CD4-positive, alpha-beta memory T cell (primary cell): ENCODE measurements at regions of chr12 and their contacts with region 1.

Region 1: DNA sequence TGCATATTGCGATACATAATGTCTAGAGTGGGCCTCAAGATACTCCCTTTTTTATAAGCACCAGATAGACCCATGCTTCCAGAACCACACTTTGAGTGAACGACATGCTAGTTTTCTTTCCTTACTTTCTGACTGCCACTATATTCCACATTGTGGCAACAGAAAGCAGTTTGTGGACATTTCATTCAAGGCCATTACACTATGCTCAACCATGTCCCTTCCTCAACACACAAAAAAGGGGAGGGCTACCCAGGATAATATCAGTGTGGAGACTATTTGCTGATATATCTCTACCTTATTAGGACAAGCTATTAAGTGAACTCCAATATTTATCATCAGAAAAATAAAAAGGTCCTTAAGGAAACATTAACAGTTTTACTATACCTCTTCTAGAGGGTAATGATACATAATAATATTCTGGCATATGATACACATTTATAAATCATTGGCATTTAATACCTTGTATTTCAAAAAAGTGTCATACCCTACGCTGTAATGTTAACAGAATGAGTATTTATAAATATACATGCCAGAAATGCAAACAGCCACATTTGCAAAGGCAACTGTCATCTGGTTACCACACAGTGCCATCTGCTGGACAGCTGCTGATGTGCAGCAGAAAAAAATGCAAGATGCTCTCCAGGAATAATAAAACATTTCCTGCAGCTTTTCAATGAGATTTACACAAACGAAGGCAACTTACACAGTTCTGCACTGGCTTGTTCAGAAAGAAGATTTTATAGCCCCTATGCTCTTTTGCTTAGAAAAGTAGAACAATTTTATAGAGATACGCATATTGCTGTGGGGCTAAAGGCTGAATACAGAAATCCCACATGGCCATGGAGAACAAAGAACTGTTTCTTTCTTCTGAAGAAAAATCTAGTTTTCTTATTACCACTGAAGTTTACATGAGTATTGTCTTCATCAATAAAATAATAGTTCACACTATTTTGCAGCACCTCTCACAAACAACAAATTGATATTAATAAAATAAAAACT is 182.2 kb upstream of the GRIP1 start:
- DNase-seq: peak; percentile 36 to 49 (median 42)
- H3K4me3 ChIP-seq: no peak overlapping the region
- H3K4me3 Mint-ChIP-seq: no peak overlapping the region
- H3K27ac ChIP-seq: no peak overlapping the region
- H3K27ac Mint-ChIP-seq: no peak overlapping the region
- H3K4me1 ChIP-seq: no peaks in the 10 kb centered on the region
- H3K4me1 Mint-ChIP-seq: no peaks in the 10 kb centered on the region
- H3K27me3 ChIP-seq: no peaks in the 10 kb centered on the region
- H3K27me3 Mint-ChIP-seq: peaks cover 3 to 6% of the 10 kb centered on the region in 2 donors

Region 2: DNA sequence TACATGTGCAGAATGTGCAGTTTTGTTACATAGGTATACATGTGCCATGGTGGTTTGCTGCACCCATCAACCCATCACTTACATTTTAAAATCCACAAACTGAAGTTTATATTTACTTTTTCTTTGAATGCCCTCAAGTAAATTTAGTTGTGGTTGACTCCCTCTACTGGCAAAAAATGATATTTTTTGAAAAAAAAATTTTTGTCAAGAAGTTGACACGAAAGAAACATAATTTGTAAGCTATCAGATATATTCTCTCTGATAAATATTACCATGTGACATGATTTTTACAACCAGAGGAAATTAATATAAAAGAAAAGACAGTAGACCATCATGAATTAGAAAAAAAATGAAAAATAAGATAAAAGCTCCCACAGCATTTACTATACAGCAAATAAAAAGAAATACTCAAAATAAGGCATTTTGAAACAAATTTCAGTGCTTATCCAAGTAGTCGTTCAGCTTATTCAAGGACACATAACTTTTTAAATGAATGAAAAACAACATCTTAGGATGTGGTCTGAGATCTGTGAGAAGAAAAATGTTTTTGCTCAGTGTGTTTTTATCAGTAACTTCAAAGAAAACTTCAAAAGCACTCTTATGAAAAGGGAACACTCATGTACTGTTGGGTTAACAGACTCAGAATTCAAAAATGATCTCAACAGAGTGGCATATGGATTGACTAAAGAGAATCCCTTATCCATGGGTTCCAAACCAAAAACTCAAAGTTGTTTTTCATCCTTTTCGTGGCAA is 152.2 kb before region 1 on chr12:
- CTCF ChIA-PET with region 1: no interaction called
- POLR2A ChIA-PET with region 1: no interaction called
- intact Hi-C with region 1: loop called (anchors 5 kb)
- DNase-seq: peak in 4 of 5 donors; percentile 13 to 32 (median 18)
- H3K4me3 ChIP-seq: no peak overlapping the region
- H3K4me3 Mint-ChIP-seq: peak overlapping the region in 6 of 8 donors; percentile 3 to 63 (median 45)
- H3K27ac ChIP-seq: no peak overlapping the region
- H3K27ac Mint-ChIP-seq: peak overlapping the region in 5 of 7 donors; percentile 7 to 54 (median 19)
- H3K4me1 ChIP-seq: peaks cover 10% of the 10 kb centered on the region
- H3K4me1 Mint-ChIP-seq: peaks cover 6 to 18% (median 11%) of the 10 kb centered on the region in 4 donors
- H3K27me3 ChIP-seq: no peaks in the 10 kb centered on the region
- H3K27me3 Mint-ChIP-seq: peaks cover 4 to 6% of the 10 kb centered on the region in 2 donors

Region 3: GRCh38 chr12:66717036-66717673 is 143.9 kb before region 1 on chr12:
- CTCF ChIA-PET with region 1: no interaction called
- POLR2A ChIA-PET with region 1: no interaction called
- intact Hi-C with region 1: loop called (anchors 1 kb)
- DNase-seq: no peak
- H3K4me3 ChIP-seq: no peak overlapping the region
- H3K4me3 Mint-ChIP-seq: no peak overlapping the region
- H3K27ac ChIP-seq: no peak overlapping the region
- H3K27ac Mint-ChIP-seq: no peak overlapping the region
- H3K4me1 ChIP-seq: peaks cover 10% of the 10 kb centered on the region
- H3K4me1 Mint-ChIP-seq: peaks cover 7 to 15% (median 11%) of the 10 kb centered on the region in 4 donors
- H3K27me3 ChIP-seq: no peaks in the 10 kb centered on the region
- H3K27me3 Mint-ChIP-seq: no peaks in the 10 kb centered on the region

Region 4: GRCh38 chr12:66829660-66830325 is 31.3 kb before region 1 on chr12:
- CTCF ChIA-PET with region 1: no interaction called
- POLR2A ChIA-PET with region 1: no interaction called
- intact Hi-C with region 1: no loop called
- DNase-seq: peak in 2 of 5 donors; percentile 3 to 10
- H3K4me3 ChIP-seq: no peak overlapping the region
- H3K4me3 Mint-ChIP-seq: peak overlapping the region in 5 of 8 donors; percentile 5 to 77 (median 31)
- H3K27ac ChIP-seq: no peak overlapping the region
- H3K27ac Mint-ChIP-seq: peak overlapping the region in 5 of 7 donors; percentile 2 to 82 (median 54)
- H3K4me1 ChIP-seq: peaks cover 17% of the 10 kb centered on the region
- H3K4me1 Mint-ChIP-seq: peaks cover 8 to 23% (median 19%) of the 10 kb centered on the region in 4 donors
- H3K27me3 ChIP-seq: no peaks in the 10 kb centered on the region
- H3K27me3 Mint-ChIP-seq: no peaks in the 10 kb centered on the region